ENCODE measurements at regions of chr5 and their contacts with region 1.

Region 1: DNA sequence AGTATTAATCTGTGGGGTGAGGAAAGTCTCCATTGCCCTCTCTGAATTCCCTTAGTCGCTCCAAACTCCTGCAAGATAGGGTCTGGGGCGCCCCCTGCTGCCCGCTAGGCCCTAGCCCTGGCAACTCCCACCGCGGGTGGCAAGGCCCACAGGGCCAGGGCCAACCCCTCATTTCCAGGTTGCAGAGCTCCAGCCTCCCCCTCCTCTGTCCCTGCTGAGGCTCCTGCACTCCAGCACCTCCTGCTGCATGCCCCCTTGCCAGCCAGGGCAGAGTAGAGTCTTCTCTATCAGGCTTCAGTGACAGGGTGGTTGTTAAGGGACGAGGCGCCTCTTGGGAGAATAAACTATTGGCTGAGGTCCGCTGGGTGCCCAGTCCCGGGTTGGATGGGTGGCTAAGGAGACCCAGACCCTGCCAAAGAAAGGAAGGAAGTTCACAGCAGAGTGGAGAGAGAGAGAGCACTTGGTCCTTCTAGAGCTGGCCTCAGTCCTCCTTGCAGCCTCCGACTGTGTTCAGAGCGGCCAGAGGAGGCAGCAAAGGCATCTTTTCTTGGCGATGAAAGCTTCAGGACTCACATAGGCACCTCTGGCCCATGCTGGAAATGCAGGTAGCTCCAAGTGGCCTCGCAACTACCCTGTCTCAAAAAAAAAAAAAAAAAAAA is 45.6 kb downstream of the SAR1B start:
- DNase-seq: peak; percentile 45
- ATAC-seq: peak; percentile 96
- H3K4me3 ChIP-seq: no peak overlapping the region
- H3K27ac ChIP-seq: no peak overlapping the region
- H3K4me1 ChIP-seq: peaks cover 6% of the 10 kb centered on the region
- H3K27me3 ChIP-seq: no peaks in the 10 kb centered on the region
- CTCF ChIP-seq: peak; percentile 81 to 88 (median 87)
- EP300 ChIP-seq: no peak
- POLR2A ChIP-seq: no peak
- RAD21 ChIP-seq: peak; percentile 90

Region 2: GRCh38 chr5:134296213-134296612 is 290.8 kb before region 1 on chr5:
- CTCF ChIA-PET with region 1: interaction called, 22 read pairs
- POLR2A ChIA-PET with region 1: no interaction called
- RAD21 ChIA-PET with region 1: interaction called, 4 read pairs
- SMC1A ChIA-PET with region 1: interaction called, 7 read pairs
- in situ Hi-C with region 1: no loop called
- intact Hi-C with region 1: no loop called
- DNase-seq: no peak
- ATAC-seq: no peak
- H3K4me3 ChIP-seq: no peak overlapping the region
- H3K27ac ChIP-seq: no peak overlapping the region
- H3K4me1 ChIP-seq: no peaks in the 10 kb centered on the region
- H3K27me3 ChIP-seq: no peaks in the 10 kb centered on the region
- CTCF ChIP-seq: no peak
- EP300 ChIP-seq: no peak
- POLR2A ChIP-seq: no peak
- RAD21 ChIP-seq: no peak

Region 3: DNA sequence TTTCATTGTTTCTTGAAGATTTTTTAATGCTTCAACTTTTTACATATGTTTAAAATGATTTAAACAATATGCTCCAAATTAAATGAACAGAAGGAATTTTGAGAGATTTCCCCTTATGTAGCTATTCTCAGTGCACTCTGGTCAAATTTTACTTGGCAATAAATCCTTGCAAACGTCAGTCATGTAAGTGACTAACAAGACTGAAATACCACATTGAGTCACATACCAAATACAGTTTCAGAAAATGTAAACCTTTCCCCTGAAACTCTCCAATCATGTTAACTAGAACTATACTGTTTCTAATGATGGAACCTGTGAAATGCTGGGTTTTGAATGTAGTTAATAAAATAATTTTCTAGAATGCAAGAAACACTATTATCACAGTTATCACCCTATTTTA is 16.1 kb after region 1 on chr5:
- CTCF ChIA-PET with region 1: interaction called, 38 read pairs
- POLR2A ChIA-PET with region 1: interaction called, 7 read pairs
- RAD21 ChIA-PET with region 1: interaction called, 26 read pairs
- SMC1A ChIA-PET with region 1: interaction called, 22 read pairs
- in situ Hi-C with region 1: no loop called
- intact Hi-C with region 1: no loop called
- DNase-seq: no peak
- ATAC-seq: peak; percentile 91
- H3K4me3 ChIP-seq: no peak overlapping the region
- H3K27ac ChIP-seq: no peak overlapping the region
- H3K4me1 ChIP-seq: peaks cover 10% of the 10 kb centered on the region; the same call in 1 of the 2 replicates
- H3K27me3 ChIP-seq: no peaks in the 10 kb centered on the region
- CTCF ChIP-seq: no peak
- EP300 ChIP-seq: no peak
- POLR2A ChIP-seq: no peak
- RAD21 ChIP-seq: no peak

Region 4: DNA sequence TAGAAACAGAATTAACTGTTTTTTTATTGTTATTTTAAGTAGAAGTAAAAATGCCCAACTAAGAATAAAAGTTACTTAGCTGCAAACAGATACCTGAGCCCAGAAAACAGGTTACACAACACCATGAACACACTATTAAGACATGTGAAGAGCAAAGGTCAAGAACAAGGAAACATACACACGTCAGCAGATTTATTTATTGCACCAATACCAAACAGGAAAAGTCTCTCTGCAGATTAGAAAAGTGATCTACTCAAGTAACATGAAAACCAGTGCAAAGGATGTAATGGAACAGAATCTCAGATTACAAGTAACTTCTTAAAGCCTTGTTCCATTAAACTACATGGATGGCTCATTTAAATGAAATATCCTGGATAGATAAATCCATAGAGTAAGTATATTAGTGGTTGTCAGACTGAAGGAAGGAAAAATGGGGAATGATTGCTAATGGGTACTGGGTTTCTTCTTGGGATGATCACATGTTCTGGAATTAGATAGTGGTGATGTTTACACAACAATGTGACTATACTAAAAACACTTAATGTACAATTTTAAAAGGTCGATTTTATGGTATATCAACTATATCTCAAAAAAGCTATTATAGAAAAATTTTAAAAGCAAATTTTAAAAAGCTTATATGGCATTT is 39.5 kb after region 1 on chr5:
- CTCF ChIA-PET with region 1: interaction called, 8 read pairs
- POLR2A ChIA-PET with region 1: no interaction called
- RAD21 ChIA-PET with region 1: interaction called, 4 read pairs
- SMC1A ChIA-PET with region 1: interaction called, 10 read pairs
- in situ Hi-C with region 1: no loop called
- intact Hi-C with region 1: no loop called
- DNase-seq: no peak
- ATAC-seq: peak; percentile 53
- H3K4me3 ChIP-seq: no peak overlapping the region
- H3K27ac ChIP-seq: no peak overlapping the region
- H3K4me1 ChIP-seq: peaks cover 3% of the 10 kb centered on the region; the same call in 1 of the 2 replicates
- H3K27me3 ChIP-seq: no peaks in the 10 kb centered on the region
- CTCF ChIP-seq: no peak
- EP300 ChIP-seq: no peak
- POLR2A ChIP-seq: no peak
- RAD21 ChIP-seq: no peak

Region 5: DNA sequence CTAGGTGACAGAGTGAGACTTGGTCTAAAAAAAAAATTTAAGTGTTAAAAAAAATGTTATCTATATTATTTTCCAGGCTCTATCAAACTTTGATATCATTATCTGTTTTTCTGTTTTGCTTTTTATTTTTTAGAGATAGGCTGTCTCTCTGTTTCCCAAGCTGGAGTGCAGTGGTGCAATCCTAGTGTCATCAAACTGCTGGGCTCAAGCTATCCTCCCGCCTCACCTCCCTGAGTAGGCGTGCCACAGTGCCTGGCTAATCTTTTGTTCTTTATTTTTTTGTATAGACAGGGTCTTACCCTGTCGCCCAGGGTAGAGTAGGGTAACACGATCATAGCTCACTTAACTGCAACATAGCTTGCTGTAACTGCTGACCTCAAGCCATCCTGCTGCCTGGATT is 76.0 kb after region 1 on chr5:
- CTCF ChIA-PET with region 1: interaction called, 19 read pairs
- POLR2A ChIA-PET with region 1: no interaction called
- RAD21 ChIA-PET with region 1: interaction called, 6 read pairs
- SMC1A ChIA-PET with region 1: interaction called, 7 read pairs
- in situ Hi-C with region 1: no loop called
- intact Hi-C with region 1: no loop called
- DNase-seq: no peak
- ATAC-seq: no peak
- H3K4me3 ChIP-seq: no peak overlapping the region
- H3K27ac ChIP-seq: no peak overlapping the region
- H3K4me1 ChIP-seq: no peaks in the 10 kb centered on the region
- H3K27me3 ChIP-seq: no peaks in the 10 kb centered on the region
- CTCF ChIP-seq: no peak
- EP300 ChIP-seq: no peak
- POLR2A ChIP-seq: no peak
- RAD21 ChIP-seq: no peak